Activated CD4-positive, alpha-beta memory T cell treated with anti-CD3 and anti-CD28 coated beads for 36 hours (primary cell): ENCODE measurements at regions of chr6 and their contacts with region 1.

Region 1: DNA sequence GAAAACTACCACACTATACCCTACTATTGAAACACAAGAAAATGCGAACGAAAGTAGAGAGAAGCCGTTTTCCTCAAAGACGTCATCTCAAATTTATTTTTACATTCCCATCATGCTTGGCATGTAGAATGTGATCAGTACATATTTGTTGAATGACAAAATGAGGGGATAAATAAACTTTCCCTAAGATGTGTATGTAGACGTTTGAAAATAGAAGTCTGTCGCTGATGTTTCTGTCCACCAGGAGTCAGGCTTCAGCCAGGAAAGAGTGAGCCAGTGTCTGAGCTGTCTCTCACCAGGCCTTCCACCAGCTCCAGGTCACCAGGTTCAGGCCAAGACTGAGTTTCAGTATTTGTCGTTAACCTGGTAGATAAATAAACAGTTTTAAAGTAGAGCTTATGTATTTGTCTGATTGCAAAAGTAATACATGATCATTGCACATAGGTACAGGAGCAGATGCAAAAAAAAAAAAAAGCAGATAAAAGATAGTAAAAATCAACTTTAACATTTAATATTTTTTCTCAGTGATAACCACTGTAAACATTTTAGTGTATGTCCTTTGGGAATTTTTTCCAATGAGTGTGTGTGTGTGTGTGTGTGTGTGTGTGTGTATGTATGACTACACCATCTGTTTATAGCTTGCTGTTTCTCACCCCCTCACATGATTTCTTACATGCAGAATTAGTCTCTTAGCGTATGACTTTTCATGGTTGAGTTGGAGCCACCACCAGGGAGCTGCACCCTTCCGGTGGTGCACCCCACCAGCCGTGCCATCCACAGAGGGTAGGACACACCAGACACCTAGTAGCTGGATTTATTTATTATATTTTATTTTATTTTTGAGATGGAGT is 26.2 kb downstream of the WRNIP1 start:
- DNase-seq: peak; percentile 82
- H3K4me3 Mint-ChIP-seq: no peak overlapping the region
- H3K27ac Mint-ChIP-seq: no peak overlapping the region
- H3K4me1 Mint-ChIP-seq: peaks cover 34% of the 10 kb centered on the region
- H3K27me3 Mint-ChIP-seq: no peaks in the 10 kb centered on the region

Region 2: GRCh38 chr6:2765166-2765895 is 26.0 kb before region 1 on chr6 and contains the start of gene WRNIP1:
- CTCF ChIA-PET with region 1: interaction called, 4 read pairs
- POLR2A ChIA-PET with region 1: interaction called, 4 read pairs
- intact Hi-C with region 1: loop called (anchors 2 kb)
- DNase-seq: peak; percentile 98
- H3K4me3 Mint-ChIP-seq: peak within 1 kb of the TSS; percentile 92
- H3K27ac Mint-ChIP-seq: peak within 1 kb of the TSS; percentile 97
- H3K4me1 Mint-ChIP-seq: peaks cover 45% of the 10 kb centered on the region
- H3K27me3 Mint-ChIP-seq: no peaks in the 10 kb centered on the region
- total RNA-seq, gene WRNIP1: 32.7 to 32.8 TPM

Region 3: DNA sequence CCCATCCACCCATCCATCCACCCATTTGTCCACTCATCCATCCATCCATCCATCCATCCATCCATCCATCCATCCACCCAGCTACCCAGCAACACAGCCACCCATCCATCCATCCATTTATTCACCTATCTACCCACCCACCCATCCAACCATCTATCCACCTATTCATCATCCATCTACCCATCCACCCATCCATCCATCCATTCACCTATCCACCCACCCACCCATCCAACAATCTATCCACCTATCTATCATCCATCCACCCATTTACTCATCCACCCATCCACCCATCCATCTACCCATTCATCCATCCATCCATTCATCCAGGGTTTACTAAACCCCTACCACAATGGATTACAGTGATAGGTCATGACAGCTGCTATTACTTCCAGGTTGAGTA is 42.9 kb after region 1 on chr6:
- CTCF ChIA-PET with region 1: interaction called, 56 read pairs
- POLR2A ChIA-PET with region 1: no interaction called
- intact Hi-C with region 1: no loop called
- DNase-seq: no peak
- H3K4me3 Mint-ChIP-seq: no peak overlapping the region
- H3K27ac Mint-ChIP-seq: no peak overlapping the region
- H3K4me1 Mint-ChIP-seq: peaks cover 27% of the 10 kb centered on the region
- H3K27me3 Mint-ChIP-seq: no peaks in the 10 kb centered on the region

Region 4: DNA sequence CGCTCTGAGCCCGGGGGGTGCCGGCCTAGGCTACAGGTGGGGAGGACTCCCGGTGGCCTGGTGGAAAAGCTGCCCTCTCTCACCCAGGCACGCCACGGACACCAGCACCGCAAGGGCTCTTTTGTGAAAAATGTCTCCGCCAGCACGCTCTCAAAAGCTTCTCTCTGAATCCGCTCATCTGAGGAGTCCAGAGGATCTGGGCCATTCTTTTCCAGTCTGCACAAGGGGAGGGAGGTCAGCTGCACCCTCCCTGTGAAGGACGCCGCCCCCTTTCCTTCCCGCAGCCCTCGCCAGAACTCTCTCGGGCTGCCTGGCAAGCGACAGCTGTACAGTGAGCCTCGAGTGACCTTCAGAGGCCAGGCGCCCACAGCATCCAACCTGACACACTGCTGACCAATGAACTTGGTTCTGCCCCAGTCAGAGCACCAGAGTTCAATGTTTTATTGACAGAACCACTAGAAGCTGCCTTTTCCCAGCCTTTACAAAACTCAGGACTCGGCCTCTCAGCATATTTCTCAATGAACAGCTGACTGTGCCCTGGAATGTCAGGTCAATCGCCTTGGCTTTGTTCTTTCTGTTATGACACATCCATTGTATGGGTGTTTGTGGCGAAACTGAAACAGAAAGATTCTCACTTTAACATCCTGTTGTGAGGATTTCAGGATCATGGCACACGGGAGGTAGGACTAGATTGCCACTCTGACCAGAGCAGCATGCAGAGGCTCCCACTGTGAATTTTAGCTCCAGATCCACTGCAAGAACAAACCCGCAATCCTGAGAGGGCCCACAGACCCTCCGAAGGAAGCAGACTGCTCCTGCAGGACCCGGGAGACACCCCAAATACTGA is 85.1 kb after region 1 on chr6:
- CTCF ChIA-PET with region 1: no interaction called
- POLR2A ChIA-PET with region 1: no interaction called
- intact Hi-C with region 1: no loop called
- DNase-seq: peak; percentile 44
- H3K4me3 Mint-ChIP-seq: peak overlapping the region; percentile 80
- H3K27ac Mint-ChIP-seq: peak overlapping the region; percentile 90
- H3K4me1 Mint-ChIP-seq: peaks cover 81% of the 10 kb centered on the region
- H3K27me3 Mint-ChIP-seq: no peaks in the 10 kb centered on the region

Region 5: DNA sequence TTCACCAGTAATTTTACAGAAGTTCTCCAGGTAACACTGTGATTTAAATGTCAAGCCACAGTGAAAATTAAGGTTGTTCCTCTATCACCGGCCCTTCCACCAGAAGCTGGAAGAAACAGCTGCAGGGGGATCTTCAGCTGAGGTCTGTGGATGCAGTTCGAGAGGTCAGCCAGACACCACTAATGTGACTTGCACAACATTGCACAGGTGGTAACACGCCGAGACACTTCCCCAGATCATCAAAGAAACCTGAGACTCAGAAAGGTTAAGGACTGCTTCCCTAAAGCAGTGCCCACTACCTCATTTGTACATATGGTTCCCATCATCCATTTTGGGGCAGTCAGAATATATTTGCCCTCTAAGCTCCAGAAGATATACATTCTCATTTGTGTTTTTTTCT is 119.8 kb after region 1 on chr6:
- CTCF ChIA-PET with region 1: interaction called, 13 read pairs
- POLR2A ChIA-PET with region 1: no interaction called
- intact Hi-C with region 1: loop called (anchors 1 kb)
- DNase-seq: no peak
- H3K4me3 Mint-ChIP-seq: no peak overlapping the region
- H3K27ac Mint-ChIP-seq: no peak overlapping the region
- H3K4me1 Mint-ChIP-seq: peaks cover 34% of the 10 kb centered on the region
- H3K27me3 Mint-ChIP-seq: no peaks in the 10 kb centered on the region

Region 6: GRCh38 chr6:2940010-2940850 is 148.9 kb after region 1 on chr6:
- CTCF ChIA-PET with region 1: interaction called, 5 read pairs
- POLR2A ChIA-PET with region 1: interaction called, 3 read pairs
- intact Hi-C with region 1: loop called (anchors 1 kb)
- DNase-seq: peak; percentile 92
- H3K4me3 Mint-ChIP-seq: peak overlapping the region; percentile 54
- H3K27ac Mint-ChIP-seq: peak overlapping the region; percentile 99
- H3K4me1 Mint-ChIP-seq: peaks cover 67% of the 10 kb centered on the region
- H3K27me3 Mint-ChIP-seq: peaks cover 1% of the 10 kb centered on the region